ENCODE measurements at regions of chr5 and their contacts with region 1.

Region 1: DNA sequence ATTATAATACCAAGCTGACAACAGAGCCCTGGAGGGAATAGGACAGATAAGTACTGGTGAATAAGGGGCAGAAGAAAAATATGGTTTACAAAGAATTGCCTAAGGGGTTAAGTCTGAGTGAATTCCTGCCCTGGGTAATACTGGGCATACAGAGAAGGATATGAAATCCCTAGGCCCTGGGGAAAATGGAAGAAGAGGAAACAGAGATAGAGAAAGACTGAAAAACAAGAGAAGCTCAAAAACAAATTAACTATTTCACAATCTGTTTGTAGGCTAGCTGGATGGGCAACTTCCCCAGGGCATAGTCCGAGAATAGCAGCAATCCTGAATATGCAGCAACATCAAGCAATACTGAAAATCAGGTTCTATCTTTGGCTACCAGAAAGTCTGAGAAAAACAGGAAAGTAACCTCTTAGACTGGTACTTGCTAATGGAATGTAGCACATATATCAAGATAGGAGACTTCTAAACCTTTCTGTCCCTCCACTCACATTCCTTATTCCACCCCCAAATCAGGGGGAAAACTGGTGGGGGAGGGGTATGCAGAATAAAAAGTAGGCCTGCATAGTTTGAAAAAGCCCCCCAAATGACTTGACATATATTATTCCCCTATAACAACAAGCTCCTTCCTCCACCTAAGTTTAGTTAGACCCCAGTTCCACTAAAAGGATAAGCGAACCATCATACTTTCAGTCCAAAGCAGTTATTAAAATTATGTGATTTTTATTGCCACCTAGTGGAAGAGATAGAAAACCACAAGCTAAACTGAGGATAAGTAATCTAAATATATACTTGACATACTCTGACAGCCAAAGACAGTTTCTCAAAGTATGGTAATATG is 20.6 kb downstream of the SLC38A9 start:
- DNase-seq: no peak
- H3K4me3 ChIP-seq: no peak overlapping the region
- CTCF ChIP-seq: peak; percentile 25

Region 2: DNA sequence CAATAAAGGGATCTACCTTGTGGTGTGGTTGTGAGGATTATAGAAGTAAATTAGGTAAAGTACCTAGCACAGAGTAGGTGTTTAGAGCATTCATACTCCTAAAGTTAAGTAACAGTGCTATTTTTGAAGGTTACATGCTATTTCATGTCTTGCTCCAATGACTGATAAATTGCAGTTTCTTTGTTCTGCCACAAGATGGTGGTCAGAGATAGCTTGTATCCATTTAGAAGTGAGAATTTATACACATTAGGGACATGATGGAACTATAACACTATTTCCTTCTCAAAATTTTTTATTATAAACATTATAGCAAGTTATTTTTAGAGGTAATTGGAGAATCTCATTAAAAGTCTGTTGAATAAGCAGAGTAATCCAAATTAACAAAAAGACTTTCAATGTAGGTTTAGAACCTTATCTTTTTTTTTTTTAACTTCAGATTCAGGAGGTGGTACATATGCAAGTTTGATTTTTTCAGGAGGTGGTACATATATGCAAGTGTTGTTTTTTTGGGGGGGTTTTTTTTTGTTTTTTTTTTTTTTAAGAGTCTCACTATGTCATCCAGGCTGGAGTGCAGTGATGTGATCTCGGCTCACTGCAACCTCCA is 366.6 kb before region 1 on chr5:
- CTCF ChIA-PET with region 1: interaction called, 19 read pairs
- POLR2A ChIA-PET with region 1: no interaction called
- DNase-seq: no peak
- H3K4me3 ChIP-seq: no peak overlapping the region
- CTCF ChIP-seq: peak; percentile 56

Region 3: GRCh38 chr5:55360190-55360589 is 331.3 kb before region 1 on chr5:
- CTCF ChIA-PET with region 1: interaction called, 11 read pairs
- POLR2A ChIA-PET with region 1: no interaction called
- DNase-seq: peak; percentile 3
- H3K4me3 ChIP-seq: no peak overlapping the region
- CTCF ChIP-seq: no peak

Region 4: GRCh38 chr5:55418994-55419968 is 272.2 kb before region 1 on chr5:
- CTCF ChIA-PET with region 1: interaction called, 11 read pairs
- POLR2A ChIA-PET with region 1: no interaction called
- DNase-seq: no peak
- H3K4me3 ChIP-seq: no peak overlapping the region
- CTCF ChIP-seq: no peak

Region 5: DNA sequence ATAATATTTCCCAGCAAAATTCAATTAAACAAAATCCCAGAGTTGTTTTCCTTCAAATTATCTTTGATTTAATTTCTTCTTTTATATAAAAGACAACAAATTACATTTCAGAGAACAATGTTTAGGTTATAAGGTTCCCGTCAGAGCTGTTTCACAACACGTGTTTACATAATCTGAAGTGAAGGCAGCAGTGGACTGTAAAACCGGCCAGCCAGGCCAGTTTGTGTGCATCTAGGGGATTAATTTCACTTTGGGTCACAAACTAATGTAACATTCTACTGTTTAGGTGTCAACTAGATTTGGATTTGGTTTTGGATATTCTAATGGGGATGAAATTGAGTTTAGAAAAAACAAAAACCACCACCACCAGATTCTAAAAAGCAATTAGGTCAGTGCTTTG is 70.3 kb before region 1 on chr5:
- CTCF ChIA-PET with region 1: no interaction called
- POLR2A ChIA-PET with region 1: no interaction called
- DNase-seq: no peak
- H3K4me3 ChIP-seq: no peak overlapping the region
- CTCF ChIP-seq: no peak

Region 6: DNA sequence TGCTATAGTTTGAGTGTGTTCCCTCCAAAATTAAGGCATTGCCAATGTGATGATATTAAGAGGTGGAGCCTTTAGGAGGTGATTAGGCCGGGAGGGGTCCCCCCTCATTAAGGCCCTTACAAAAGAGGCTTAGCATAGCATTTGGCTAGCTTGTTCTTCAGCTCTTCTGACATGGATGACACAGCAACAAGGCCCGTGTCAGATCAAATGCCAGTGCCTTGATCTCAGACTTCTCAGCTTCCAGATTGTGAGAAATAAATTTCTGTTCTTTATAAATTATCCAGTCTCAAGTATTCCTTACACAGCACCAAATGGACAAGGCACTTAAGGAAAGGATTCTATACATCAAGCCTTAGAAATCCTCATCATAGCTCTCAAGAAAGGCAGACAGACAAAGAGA is 11.1 kb before region 1 on chr5:
- CTCF ChIA-PET with region 1: interaction called, 28 read pairs
- POLR2A ChIA-PET with region 1: no interaction called
- DNase-seq: no peak
- H3K4me3 ChIP-seq: no peak overlapping the region
- CTCF ChIP-seq: no peak

Measured in AG04449 (cell line).